ENCODE measurements at regions of chr16 and their contacts with region 1.

Region 1: DNA sequence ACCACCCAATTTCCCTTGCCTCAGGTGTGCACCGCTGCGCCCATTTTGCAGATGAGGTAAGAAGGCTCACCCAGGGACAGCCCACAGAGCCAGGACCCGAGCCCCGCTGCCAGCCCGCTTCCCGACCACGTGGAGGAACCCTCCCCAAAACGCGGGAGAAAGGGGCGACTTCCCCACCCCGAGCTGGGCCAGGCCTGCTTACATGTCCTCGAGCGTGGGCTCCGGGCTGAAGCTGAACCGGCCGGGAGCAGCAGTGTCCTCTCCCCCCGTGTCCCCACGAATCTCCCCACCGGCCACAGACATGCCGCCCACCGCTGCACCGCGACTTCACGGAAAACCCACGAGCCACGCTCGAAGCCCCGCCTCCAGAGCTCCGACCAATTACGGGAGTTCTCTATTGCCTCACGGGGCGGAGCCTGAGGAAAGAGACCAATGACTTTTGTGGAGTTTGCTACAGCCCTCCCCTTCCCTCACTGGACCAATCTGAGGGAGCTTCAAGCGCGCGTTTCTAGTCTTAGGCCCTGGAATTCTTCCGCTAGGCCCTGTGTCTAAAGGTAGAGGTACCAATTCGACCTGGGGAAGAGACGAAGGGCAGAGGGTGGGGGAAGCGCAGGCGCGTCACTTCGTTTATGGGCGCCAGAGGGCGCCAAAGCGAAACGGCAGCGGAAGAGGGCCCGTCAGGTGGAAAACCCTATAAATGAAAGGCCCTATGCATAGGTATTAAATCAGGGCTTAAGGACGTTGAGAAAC is at the start of gene DCTPP1:
- DNase-seq: peak; percentile 99 to 100
- H3K4me3 ChIP-seq: peak within 1 kb of the TSS; percentile 77
- H3K4me1 ChIP-seq: peaks cover 5% of the 10 kb centered on the region
- H3K27me3 ChIP-seq: no peaks in the 10 kb centered on the region

Region 2: GRCh38 chr16:30370444-30371247 is 59.2 kb before region 1 on chr16 and contains the start of gene TBC1D10B:
- in situ Hi-C with region 1: no loop called
- DNase-seq: peak; percentile 99 to 100
- H3K4me3 ChIP-seq: peak within 1 kb of the TSS; percentile 68
- H3K4me1 ChIP-seq: peaks cover 10% of the 10 kb centered on the region
- H3K27me3 ChIP-seq: no peaks in the 10 kb centered on the region

Region 3: DNA sequence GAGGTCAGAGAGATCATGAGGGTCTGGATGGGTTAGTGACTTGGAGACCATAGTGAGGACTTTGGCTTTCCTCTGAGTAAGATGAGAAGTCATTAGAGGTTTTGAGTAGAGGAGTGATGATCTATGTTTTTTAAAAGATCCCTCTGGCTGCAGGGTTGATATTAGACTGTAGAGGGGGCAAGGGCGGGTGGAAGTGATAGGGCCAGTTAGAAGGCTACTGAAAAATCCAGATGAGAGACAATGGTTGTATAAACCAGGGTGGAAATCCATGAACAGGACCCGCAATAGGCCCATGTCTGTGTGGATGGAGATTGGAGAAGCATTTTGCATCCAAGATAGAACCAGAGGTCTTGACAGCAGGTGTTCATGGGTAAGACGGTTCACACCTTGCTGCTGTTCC is 52.5 kb after region 1 on chr16:
- in situ Hi-C with region 1: loop called (anchors 10 kb)
- DNase-seq: no peak
- H3K4me3 ChIP-seq: no peak overlapping the region
- H3K4me1 ChIP-seq: no peaks in the 10 kb centered on the region
- H3K27me3 ChIP-seq: no peaks in the 10 kb centered on the region

Region 4: GRCh38 chr16:30526823-30527635 is 97.2 kb after region 1 on chr16:
- in situ Hi-C with region 1: loop called (anchors 10 kb)
- DNase-seq: peak; percentile 97 to 99
- H3K4me3 ChIP-seq: peak overlapping the region; percentile 90
- H3K4me1 ChIP-seq: peaks cover 5% of the 10 kb centered on the region
- H3K27me3 ChIP-seq: no peaks in the 10 kb centered on the region

Region 5: DNA sequence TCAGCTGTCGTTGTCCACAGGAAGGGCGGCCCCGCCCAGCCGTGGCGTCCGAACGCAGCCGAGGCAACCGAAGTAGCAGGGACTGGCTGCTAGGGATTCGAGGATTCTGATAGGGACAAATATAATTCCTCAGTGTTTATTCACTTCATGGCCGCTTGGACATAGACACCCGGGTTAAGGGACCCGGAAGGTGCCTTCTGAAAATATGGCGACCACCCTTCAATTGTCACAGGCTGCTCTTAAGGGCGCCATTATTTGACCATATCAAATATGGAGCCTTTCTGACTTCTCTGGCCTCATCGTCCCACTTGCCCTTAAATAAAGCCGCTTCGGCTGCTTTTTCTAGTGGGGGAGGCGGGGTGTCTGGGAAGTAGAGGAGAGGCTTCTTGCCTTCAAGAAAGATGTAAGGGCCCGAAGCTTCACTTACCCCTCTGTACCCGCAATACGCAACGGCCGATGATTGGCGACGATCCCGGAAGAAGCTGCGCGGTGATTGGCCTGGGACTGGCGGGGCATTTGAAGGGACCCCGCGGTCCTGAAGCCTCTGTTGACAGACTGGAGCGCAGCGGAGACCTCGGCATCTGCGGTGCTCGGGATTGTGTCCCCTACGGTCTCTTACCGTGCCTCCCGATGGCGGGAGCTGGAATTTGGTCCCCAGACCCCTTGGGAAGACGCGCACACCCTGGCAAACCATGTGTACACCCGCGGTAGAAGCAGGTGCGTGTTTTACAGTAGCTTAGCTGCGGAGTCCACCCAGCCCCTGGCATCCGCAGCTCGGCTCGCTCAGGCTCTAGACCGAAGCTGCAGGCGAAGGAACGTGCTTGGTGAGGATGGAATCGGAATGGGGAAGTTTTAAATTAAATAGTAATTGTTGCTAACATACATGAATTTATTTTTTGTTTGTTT is 142.1 kb after region 1 on chr16 and contains the start of gene ZNF688:
- in situ Hi-C with region 1: loop called (anchors 10 kb)
- DNase-seq: peak; percentile 98 to 99
- H3K4me3 ChIP-seq: peak within 1 kb of the TSS; percentile 61
- H3K4me1 ChIP-seq: peaks cover 14% of the 10 kb centered on the region
- H3K27me3 ChIP-seq: no peaks in the 10 kb centered on the region

Region 6: DNA sequence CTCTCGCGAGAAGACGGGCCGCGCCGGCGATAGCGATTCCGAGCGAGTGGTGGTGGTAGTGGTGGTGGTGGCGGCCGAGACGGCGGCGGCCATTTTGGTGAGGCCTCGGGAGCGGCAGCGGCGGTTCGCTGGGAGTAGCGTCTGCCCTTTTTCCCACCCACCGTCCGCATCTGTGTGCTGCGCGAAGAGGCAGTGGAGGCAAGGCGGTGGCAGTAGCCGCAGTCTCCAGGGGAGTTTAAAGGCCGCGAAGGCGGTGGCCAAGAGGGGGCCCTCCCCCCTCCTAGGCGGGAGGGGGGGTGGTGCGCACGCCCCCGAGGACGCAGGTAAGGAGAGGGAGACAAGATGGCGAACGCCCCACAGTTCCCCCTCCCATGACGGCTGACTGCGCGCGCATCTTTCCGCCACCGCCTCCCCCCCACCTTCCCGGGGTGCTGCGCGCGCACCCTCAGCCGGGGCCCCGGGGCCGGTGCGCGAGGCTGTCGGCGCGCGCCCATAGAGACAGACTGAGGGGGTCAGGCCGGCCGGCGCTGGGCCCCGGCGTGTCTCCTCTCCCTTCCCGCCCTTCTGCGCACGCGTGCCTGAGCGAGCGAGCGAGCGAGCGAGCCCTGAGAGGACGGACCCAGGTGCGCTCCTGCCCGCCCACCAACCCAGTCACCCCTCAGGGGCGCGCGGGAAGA is 268.4 kb after region 1 on chr16:
- in situ Hi-C with region 1: loop called (anchors 10 kb)
- DNase-seq: peak; percentile 97 to 99
- H3K4me3 ChIP-seq: peak overlapping the region; percentile 97
- H3K4me1 ChIP-seq: peaks cover 10% of the 10 kb centered on the region
- H3K27me3 ChIP-seq: no peaks in the 10 kb centered on the region

Region 7: DNA sequence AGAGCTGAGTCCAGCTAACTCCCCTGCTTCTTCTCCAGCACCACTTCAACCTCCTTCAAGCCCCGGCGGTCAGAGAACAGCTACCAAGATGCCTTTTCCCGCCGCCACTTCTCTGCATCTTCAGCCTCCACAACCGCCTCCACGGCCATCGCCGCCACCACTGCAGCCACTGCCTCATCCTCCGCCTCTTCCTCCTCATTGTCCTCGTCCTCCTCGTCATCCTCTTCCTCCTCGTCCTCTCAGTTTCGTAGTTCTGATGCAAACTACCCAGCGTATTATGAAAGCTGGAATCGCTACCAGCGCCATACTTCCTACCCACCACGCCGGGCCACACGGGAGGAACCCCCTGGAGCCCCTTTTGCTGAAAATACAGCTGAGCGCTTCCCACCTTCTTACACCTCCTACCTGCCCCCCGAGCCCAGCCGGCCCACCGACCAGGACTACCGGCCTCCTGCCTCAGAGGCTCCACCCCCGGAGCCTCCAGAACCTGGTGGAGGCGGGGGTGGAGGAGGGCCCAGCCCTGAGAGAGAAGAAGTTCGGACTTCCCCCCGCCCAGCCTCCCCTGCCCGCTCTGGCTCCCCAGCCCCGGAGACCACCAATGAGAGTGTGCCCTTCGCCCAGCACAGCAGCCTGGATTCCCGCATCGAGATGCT is 534.8 kb after region 1 on chr16:
- in situ Hi-C with region 1: no loop called
- DNase-seq: no peak
- H3K4me3 ChIP-seq: no peak overlapping the region
- H3K4me1 ChIP-seq: no peaks in the 10 kb centered on the region
- H3K27me3 ChIP-seq: no peaks in the 10 kb centered on the region

Measured in HAP-1 (cell line).